ENCODE measurements at regions of chr11 and their contacts with region 1.

Region 1: DNA sequence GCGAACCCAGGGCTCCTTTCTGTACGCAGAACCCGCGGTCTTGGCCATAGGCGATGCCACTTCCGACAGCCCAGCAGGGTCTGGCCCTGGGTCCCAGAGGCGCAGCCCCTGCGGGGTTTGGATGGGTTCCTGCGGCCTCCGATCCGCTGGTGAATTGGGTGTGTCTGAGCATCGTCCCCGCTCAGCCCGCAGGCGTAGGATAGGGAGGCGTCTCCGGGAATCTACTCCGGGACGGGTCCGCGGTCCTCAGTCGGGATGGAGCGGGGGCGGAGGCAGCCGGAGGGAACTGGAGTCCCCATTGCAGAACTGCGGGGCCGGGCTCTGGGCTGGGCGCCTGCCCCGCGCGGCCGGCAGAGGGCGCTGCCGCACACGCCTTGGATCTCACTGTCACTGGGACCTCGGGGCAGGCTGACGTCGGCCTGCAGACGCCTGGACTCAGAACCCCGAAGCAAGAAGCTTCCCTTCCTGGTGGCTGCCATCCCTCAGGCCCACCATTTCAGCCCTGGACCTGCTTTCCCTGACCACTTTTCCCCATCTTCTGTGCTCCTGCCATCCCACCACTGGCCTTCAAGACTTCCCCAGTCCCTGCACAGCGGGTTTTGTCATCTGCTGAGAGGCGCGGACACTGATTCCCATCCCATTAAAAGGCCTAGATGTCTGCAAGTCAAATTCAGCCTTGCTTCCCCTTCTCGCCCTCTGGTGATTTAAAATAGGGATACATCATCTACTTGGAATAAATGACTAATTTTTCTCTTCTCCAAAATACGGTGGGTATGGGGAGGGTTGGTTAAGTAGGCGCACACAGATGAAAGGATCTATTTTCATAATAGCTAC is 38.3 kb upstream of the CREB3L1 start:
- DNase-seq: peak; percentile 88
- H3K4me3 Mint-ChIP-seq: peak overlapping the region; percentile 21
- H3K27ac Mint-ChIP-seq: no peak overlapping the region
- H3K4me1 Mint-ChIP-seq: peaks cover 33% of the 10 kb centered on the region
- H3K27me3 Mint-ChIP-seq: peaks cover 40% of the 10 kb centered on the region
- CTCF ChIP-seq: peak; percentile 94

Region 2: GRCh38 chr11:46121724-46122477 is 117.3 kb before region 1 on chr11:
- CTCF ChIA-PET with region 1: no interaction called
- intact Hi-C with region 1: loop called (anchors 5 kb)
- DNase-seq: peak; percentile 69
- H3K4me3 Mint-ChIP-seq: peak overlapping the region; percentile 92
- H3K27ac Mint-ChIP-seq: peak overlapping the region; percentile 66
- H3K4me1 Mint-ChIP-seq: peaks cover 12% of the 10 kb centered on the region
- H3K27me3 Mint-ChIP-seq: no peaks in the 10 kb centered on the region
- CTCF ChIP-seq: no peak

Region 3: GRCh38 chr11:46308631-46309419 is 69.6 kb after region 1 on chr11:
- CTCF ChIA-PET with region 1: interaction called, 13 read pairs
- intact Hi-C with region 1: loop called (anchors 1 kb)
- DNase-seq: peak; percentile 76
- H3K4me3 Mint-ChIP-seq: no peak overlapping the region
- H3K27ac Mint-ChIP-seq: no peak overlapping the region
- H3K4me1 Mint-ChIP-seq: peaks cover 15% of the 10 kb centered on the region
- H3K27me3 Mint-ChIP-seq: peaks cover 14% of the 10 kb centered on the region
- CTCF ChIP-seq: peak; percentile 86

Region 4: DNA sequence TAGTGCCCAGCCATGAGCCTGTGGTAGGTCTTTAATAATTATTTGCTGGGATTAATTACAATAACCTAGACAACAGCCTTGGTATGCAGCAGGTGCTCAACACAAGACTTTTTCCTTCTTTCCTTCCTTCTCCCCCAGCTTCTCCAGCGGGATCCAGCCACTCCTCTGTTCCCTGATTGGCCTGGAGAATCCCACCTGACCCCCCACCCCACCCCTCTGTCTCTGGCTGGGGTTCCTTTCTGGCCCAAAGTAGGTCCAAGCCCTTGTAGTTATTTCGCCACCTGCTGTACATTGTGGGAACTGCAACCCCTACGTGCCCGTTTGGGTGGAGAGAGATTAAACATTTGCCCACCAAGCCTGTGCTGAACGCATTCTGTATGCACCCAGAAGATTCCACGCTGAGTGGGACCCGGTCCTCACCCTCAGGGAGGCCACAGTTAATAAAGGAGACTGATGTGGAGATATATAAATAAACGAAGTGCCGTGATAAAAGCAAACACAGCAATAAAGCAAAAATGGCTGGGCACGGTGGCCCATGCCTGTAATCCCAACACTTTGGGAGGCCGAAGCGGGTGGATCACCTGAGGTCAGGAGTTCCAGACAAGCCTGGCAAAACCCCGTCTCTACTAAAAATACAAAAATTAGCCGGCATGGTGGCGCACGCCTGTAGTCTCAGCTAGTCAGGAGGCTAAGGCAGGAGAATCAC is 76.0 kb after region 1 on chr11:
- CTCF ChIA-PET with region 1: interaction called, 13 read pairs
- intact Hi-C with region 1: no loop called
- DNase-seq: peak; percentile 78
- H3K4me3 Mint-ChIP-seq: peak overlapping the region; percentile 13
- H3K27ac Mint-ChIP-seq: no peak overlapping the region
- H3K4me1 Mint-ChIP-seq: peaks cover 20% of the 10 kb centered on the region
- H3K27me3 Mint-ChIP-seq: peaks cover 30% of the 10 kb centered on the region
- CTCF ChIP-seq: peak; percentile 83

Region 5: GRCh38 chr11:46361283-46362155 is 122.3 kb after region 1 on chr11:
- CTCF ChIA-PET with region 1: no interaction called
- intact Hi-C with region 1: loop called (anchors 5 kb)
- DNase-seq: no peak
- H3K4me3 Mint-ChIP-seq: no peak overlapping the region
- H3K27ac Mint-ChIP-seq: no peak overlapping the region
- H3K4me1 Mint-ChIP-seq: peaks cover 41% of the 10 kb centered on the region
- H3K27me3 Mint-ChIP-seq: no peaks in the 10 kb centered on the region
- CTCF ChIP-seq: no peak

Region 6: DNA sequence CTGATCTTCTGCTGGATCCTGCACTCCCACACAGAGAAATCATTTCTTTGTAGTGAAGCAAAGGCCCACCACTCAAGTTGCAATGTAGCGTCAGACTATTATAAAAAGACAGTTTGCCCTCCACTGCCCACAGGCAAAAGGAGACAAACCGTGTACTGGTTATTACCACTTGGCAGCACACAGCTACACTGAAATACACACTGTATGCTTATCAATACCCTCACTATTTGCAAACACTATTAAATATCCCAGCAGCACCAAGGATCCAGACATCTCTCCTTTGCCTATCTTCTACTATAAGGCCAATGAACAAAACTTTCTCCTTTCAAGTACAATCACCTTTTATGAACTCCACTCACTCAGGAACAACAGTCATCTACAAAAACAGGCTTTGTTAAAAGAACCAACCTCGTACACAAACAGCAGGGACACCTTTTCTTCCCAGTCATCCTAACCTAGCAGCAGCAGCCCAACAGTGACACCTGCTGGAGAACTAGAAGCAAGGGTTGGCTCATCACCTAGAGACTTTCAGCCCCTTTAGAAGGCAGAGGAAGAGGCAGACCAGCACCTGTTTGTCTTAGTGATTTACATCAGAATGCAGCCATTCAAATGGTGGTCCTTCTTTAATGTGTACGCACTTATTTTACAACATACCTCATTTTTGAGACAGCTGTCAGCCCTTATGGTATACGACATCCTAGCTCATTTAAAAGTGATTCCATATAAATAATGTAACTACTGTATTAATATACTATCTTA is 298.5 kb after region 1 on chr11:
- CTCF ChIA-PET with region 1: no interaction called
- intact Hi-C with region 1: loop called (anchors 10 kb)
- DNase-seq: peak; percentile 71
- H3K4me3 Mint-ChIP-seq: no peak overlapping the region
- H3K27ac Mint-ChIP-seq: no peak overlapping the region
- H3K4me1 Mint-ChIP-seq: peaks cover 26% of the 10 kb centered on the region
- H3K27me3 Mint-ChIP-seq: no peaks in the 10 kb centered on the region
- CTCF ChIP-seq: peak; percentile 69